Dendritic cell treated with granulocyte-macrophage colony-stimulating factor and Interleukin-4, amounts not matched to agents 40 ng/mL and 50 ng/mL, for 4 days (primary cell): ENCODE measurements at regions of chr7 and their contacts with region 1.

Region 1: GRCh38 chr7:150356265-150356897 is 12.2 kb upstream of the REPIN1 start:
- H3K4me3 Mint-ChIP-seq: no peak overlapping the region
- H3K27ac Mint-ChIP-seq: no peak overlapping the region
- H3K4me1 Mint-ChIP-seq: peaks cover 20% of the 10 kb centered on the region
- H3K27me3 Mint-ChIP-seq: peaks cover 1% of the 10 kb centered on the region

Region 2: GRCh38 chr7:150388709-150389531 is 32.5 kb after region 1 on chr7:
- intact Hi-C with region 1: loop called (anchors 2 kb)
- H3K4me3 Mint-ChIP-seq: no peak overlapping the region
- H3K27ac Mint-ChIP-seq: no peak overlapping the region
- H3K4me1 Mint-ChIP-seq: peaks cover 24% of the 10 kb centered on the region
- H3K27me3 Mint-ChIP-seq: no peaks in the 10 kb centered on the region

Region 3: DNA sequence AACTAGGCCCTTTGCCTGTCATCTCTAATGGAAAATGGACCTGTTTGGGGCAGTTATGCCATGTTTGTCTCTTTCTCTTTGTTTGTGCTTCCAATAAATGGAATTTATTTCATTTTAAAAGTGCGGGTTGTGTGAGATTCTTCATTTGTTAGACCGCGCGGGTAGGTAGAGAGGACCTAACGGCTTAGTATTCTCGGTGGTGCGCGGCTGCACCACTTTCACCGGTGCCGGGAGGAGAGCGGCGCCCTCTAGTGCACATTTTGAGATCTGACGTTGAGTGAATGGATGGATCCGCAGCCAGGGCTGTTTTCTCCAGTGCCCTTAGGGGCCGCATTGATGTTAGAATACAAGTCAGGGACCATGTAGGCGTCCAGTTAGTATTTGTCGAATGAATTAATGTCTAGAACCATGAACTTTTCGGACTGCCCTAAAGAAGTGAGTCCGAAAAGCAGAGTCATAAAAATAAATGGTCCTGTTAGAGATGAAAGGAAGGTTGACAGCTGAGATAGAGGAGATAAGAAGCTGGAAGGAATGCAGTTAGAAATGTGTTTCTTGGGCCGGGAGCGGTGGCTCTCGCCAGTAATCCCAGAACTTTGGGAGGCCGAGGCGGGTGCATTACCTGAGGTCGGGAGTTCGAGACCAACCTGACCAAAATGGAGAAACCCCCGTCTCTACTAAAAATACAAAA is 64.8 kb after region 1 on chr7:
- intact Hi-C with region 1: loop called (anchors 1 kb)
- H3K4me3 Mint-ChIP-seq: no peak overlapping the region
- H3K27ac Mint-ChIP-seq: no peak overlapping the region
- H3K4me1 Mint-ChIP-seq: peaks cover 7% of the 10 kb centered on the region
- H3K27me3 Mint-ChIP-seq: peaks cover 24% of the 10 kb centered on the region

Region 4: GRCh38 chr7:150435390-150436073 is 79.2 kb after region 1 on chr7:
- intact Hi-C with region 1: no loop called
- H3K4me3 Mint-ChIP-seq: no peak overlapping the region
- H3K27ac Mint-ChIP-seq: peak overlapping the region; percentile 84
- H3K4me1 Mint-ChIP-seq: peaks cover 57% of the 10 kb centered on the region
- H3K27me3 Mint-ChIP-seq: peaks cover 60% of the 10 kb centered on the region